Calu3 (cell line): ENCODE measurements at regions of chr2 and their contacts with region 1.

Region 1: GRCh38 chr2:134783912-134784311 is 54.5 kb upstream of the ACMSD start:
- DNase-seq: no peak
- H3K4me3 Mint-ChIP-seq: no peak overlapping the region
- H3K27ac Mint-ChIP-seq: no peak overlapping the region
- H3K4me1 Mint-ChIP-seq: no peaks in the 10 kb centered on the region
- H3K27me3 Mint-ChIP-seq: no peaks in the 10 kb centered on the region
- CTCF ChIP-seq: no peak

Region 2: GRCh38 chr2:133674433-133675331 is 1109.2 kb before region 1 on chr2:
- CTCF ChIA-PET with region 1: interaction called, 12 read pairs
- intact Hi-C with region 1: no loop called
- DNase-seq: peak; percentile 43
- H3K4me3 Mint-ChIP-seq: peak overlapping the region; percentile 70
- H3K27ac Mint-ChIP-seq: no peak overlapping the region
- H3K4me1 Mint-ChIP-seq: peaks cover 31% of the 10 kb centered on the region
- H3K27me3 Mint-ChIP-seq: no peaks in the 10 kb centered on the region
- CTCF ChIP-seq: no peak

Region 3: GRCh38 chr2:134884435-134884834 is 100.5 kb after region 1 on chr2:
- CTCF ChIA-PET with region 1: no interaction called
- intact Hi-C with region 1: no loop called
- DNase-seq: no peak
- H3K4me3 Mint-ChIP-seq: no peak overlapping the region
- H3K27ac Mint-ChIP-seq: no peak overlapping the region
- H3K4me1 Mint-ChIP-seq: no peaks in the 10 kb centered on the region
- H3K27me3 Mint-ChIP-seq: no peaks in the 10 kb centered on the region
- CTCF ChIP-seq: no peak